Right ventricle myocardium superior (tissue), 1 donor: ENCODE measurements at regions of chr19 and their contacts with region 1.

Region 1: GRCh38 chr19:1275260-1275975 is at the start of gene FAM174C:
- DNase-seq: peak; percentile 97
- ATAC-seq: peak; percentile 81
- total RNA-seq, gene FAM174C: 12.4 TPM

Region 2: DNA sequence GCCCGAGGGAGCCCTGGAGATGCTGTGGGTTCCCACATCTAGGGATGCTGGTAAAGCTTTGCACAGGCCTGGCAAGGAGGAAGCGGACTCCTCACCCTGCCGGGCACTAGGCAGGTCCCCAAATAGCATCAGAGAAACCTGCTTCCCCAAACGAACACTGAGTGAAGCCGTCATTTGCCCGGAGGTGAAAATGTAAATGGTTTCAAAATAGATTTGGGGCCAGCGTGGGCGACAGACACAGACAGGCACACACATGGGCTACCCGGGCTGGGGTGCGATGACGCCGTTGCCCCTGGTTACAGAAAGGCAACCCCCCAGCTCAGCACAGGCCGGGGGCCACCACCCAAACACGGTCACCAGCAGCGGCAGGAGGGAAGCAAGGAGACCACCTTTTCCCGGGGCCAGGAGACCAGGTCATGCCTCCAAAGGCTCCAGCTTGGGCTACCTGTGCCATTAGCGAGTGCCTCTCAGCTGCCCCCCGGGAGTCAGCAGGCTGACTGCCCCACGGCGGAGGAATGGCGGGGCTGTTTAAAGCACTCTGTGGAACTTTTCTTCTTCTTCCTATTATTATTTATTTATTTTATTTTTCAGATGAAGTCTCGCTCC is 60.8 kb after region 1 on chr19:
- intact Hi-C with region 1: no loop called
- DNase-seq: no peak
- ATAC-seq: no peak

Region 3: DNA sequence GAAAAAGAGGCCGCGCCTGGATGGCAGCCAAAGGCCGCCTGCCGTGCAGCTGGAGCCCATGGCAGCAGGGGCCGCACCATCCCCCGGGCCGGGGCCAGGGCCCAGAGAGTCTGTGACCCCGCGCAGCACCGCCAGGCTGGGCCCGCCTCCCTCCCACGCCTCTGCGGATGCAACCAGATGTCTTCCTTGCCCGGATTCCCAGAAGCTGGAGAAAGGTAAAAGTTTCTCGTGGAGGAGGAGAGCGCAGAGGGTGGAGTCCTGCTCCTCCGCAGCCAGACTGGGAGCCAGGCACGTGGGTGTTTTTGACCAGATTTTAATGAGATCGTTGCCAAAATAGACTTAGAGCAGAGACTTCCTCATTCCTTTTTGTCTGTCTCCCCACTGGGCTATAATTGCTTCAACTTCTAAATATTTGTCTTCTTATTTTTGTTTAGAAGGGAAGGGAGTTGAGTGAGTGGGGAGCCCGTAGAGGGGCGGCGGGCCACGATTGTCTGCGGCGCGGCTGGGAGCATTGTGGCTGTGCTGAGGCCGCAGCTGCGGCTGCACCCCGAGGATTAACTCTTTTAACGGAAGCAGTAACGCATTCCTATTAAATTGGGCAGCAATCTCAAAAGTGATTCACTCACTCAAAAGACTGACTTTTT is 85.5 kb after region 1 on chr19:
- intact Hi-C with region 1: no loop called
- DNase-seq: peak; percentile 86
- ATAC-seq: peak; percentile 85

Region 4: DNA sequence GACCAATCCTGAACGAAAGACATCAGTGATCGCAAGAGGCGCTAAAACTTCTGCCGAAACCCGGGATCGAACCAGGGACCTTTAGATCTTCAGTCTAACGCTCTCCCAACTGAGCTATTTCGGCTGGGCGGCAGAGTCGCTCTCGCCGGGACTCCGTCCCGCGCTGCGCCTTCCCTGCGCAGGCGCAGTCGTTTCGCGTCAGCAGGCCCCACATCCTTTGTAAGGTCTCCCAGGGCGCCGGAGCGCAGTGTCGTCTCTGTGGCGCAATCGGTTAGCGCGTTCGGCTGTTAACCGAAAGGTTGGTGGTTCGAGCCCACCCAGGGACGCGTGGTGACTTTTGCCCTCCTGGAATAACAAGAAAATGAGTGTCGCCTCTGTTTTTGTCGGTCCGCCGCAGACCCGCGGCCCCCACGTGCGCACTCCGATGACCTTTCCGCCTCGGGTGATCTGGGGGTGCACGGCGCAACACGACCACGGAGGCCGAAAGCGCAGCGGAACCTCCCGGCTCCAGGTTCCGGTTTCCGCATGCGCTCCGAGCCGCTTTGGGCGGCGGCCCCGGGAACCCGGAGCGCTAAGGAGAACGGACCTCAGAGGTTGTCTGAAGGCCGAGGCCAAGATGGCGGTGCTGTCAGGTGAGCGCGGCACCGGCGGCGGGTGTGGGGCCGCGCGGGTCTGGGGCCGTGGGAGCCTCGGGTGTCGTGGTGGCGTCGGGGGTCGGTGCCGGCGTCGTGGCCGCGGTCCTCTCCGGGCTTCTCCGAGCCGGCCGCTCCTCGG is 108.1 kb after region 1 on chr19 and contains the start of gene NDUFS7:
- intact Hi-C with region 1: loop called (anchors 10 kb)
- DNase-seq: peak; percentile 92
- ATAC-seq: peak; percentile 89
- total RNA-seq, gene NDUFS7: 461 TPM